ENCODE measurements at regions of chr17 and their contacts with region 1.

Region 1: DNA sequence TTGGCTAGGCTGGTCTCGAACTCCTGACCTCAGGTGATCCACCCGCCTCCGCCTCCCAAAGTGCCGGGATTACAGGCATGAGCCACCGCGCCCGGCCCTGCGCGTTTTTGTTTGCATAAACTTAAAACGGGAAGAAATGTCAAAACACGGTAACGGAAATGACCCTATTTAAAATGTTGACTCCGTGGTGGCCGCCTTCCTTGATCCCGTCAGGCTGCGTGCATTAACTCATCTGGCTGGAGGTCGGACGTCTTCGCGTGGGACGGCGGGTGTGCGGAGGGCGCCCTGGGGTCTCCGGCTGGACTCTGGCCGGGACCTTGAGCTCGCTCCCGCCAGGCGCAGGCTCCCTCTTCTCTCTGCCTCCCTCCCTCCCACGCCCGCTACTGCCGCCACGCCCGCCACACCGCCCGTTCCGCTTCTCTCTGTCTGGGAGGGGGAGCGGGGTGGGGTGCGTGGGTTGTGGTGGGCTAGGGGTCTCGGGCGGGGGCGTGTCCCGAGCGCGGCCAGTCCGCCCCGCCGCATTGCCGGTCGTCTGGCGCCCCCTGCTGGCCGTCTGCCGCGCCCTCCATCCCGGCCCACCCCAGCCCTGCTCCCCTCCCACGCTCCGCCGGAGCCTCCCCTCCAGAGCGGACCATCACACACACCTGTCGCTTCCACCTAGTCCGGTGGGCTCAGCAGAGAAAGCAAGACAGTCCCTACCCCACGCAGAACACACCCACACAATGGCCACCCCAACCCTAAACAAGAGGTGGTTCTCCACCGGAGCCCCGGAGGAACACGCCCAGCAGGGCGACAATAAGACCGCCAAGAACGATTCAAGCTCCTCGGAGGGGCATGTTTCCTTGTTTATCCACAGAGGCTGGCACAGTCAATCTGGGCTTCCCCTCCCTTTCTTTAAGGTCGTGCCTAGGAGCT is 1.2 kb upstream of the CCDC42 start:
- DNase-seq: peak; percentile 87
- ATAC-seq: peak; percentile 91
- H3K4me3 ChIP-seq: peak overlapping the region; percentile 70
- H3K27ac ChIP-seq: peak overlapping the region; percentile 80
- H3K4me1 ChIP-seq: peaks cover 4% of the 10 kb centered on the region
- H3K27me3 ChIP-seq: no peaks in the 10 kb centered on the region
- CTCF ChIP-seq: peak; percentile 91

Region 2: DNA sequence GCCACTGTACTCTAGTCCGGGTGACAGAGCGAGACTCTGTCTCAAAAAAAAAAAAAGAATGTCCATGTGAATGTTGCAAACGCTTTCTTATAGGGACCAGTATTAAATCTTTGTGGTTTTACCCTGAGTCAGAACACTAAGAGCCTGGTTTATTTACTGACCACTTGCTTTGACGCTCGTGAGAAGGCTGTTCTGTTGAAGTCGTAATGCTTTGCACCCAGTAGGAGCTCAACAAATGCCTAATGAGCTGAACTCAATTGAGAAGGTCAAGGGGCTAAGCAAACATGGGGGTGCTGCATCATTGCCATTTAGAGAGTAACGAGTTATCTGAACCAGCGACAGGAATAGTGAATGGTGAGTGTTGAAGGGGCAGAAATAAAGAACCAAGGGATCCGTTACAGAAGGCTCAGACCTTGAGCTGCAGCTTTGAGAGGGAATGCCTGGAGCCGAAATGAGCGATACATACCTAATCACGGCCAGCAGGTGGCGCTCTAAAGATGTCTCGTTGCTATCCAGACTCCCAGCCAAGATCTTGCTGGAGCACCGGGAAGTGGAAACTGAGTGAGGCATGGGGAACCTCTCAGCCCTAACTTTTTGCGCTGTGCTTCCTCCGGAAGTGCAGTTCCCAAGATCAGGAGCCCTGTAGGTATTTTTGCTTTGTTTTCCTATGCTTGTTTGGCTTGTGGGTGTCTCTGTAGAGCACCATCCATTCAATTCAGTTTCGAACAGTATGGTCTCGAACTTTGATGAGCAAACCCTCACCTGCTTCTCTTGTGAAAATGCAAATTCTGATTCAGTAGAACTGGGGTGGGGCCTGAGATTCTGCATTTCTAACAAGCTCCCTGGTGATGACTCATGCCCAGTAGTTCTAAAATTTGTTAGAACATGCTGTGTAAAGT is 335.6 kb before region 1 on chr17:
- intact Hi-C with region 1: loop called (anchors 10 kb)
- DNase-seq: peak; percentile 91
- ATAC-seq: peak; percentile 94
- H3K4me3 ChIP-seq: no peak overlapping the region
- H3K27ac ChIP-seq: no peak overlapping the region
- H3K4me1 ChIP-seq: peaks cover 7% of the 10 kb centered on the region
- H3K27me3 ChIP-seq: no peaks in the 10 kb centered on the region
- CTCF ChIP-seq: peak; percentile 90

Region 3: DNA sequence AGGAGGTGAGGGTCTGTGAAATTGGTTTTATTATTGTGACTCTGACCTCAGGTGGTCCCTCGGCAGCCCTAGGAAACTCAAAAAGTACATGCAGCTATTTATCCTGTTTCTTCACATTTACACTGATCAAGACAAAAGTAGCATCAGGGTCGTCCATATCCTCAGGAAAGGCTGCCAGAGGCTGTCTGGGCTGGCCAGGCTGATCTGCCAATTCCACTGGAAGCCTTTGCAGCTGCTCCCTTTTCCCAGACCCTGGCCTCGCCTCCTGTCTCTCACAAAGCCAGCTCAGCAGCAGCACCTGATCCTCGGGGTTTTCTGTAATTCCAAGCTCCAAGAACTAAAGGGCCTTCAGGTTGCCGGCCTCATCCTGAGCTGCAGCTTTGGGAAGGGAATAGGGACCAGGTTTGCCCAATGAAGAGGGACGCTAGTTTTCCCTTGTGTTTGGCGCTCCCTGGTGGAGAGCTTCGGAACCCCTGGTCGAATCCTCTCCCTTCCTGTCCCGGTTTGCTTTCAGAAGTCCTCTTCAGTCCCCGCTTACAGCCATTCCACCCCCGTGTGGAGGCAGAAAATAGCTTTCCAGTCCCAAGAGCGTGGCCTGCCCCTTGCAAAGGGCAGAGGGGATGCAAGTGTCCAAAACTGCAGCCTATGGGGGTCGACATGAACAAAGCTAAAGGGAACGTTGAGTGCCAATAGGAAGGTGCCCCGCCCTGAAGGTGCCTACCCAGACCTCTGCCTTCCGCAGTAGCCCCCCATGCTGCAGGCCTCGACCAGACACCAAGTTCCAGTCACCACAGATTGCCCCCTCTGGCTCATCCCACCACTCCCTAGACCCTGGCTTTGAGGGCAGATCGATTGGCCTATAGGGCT is 39.9 kb after region 1 on chr17:
- intact Hi-C with region 1: no loop called
- DNase-seq: peak; percentile 88
- ATAC-seq: peak; percentile 90
- H3K4me3 ChIP-seq: no peak overlapping the region
- H3K27ac ChIP-seq: no peak overlapping the region
- H3K4me1 ChIP-seq: peaks cover 3% of the 10 kb centered on the region
- H3K27me3 ChIP-seq: no peaks in the 10 kb centered on the region
- CTCF ChIP-seq: peak; percentile 86

Region 4: GRCh38 chr17:9484789-9485188 is 738.9 kb after region 1 on chr17:
- intact Hi-C with region 1: no loop called
- DNase-seq: no peak
- ATAC-seq: no peak
- H3K4me3 ChIP-seq: no peak overlapping the region
- H3K27ac ChIP-seq: no peak overlapping the region
- H3K4me1 ChIP-seq: no peaks in the 10 kb centered on the region
- H3K27me3 ChIP-seq: no peaks in the 10 kb centered on the region
- CTCF ChIP-seq: no peak